Activated naive CD4-positive, alpha-beta T cell treated with anti-CD3 and anti-CD28 coated beads, Interleukin-2, amount 10 ng/mL, durations not matched to agents 7 days and 5 days (primary cell): ENCODE measurements at regions of chr3 and their contacts with region 1.

Region 1: GRCh38 chr3:112293368-112294321 is at the start of gene SLC9C1:
- DNase-seq: peak; percentile 65
- H3K4me3 Mint-ChIP-seq: peak within 1 kb of the TSS; percentile 53
- H3K27ac Mint-ChIP-seq: peak within 1 kb of the TSS; percentile 77
- H3K4me1 Mint-ChIP-seq: peaks cover 35% of the 10 kb centered on the region
- H3K27me3 Mint-ChIP-seq: no peaks in the 10 kb centered on the region

Region 2: DNA sequence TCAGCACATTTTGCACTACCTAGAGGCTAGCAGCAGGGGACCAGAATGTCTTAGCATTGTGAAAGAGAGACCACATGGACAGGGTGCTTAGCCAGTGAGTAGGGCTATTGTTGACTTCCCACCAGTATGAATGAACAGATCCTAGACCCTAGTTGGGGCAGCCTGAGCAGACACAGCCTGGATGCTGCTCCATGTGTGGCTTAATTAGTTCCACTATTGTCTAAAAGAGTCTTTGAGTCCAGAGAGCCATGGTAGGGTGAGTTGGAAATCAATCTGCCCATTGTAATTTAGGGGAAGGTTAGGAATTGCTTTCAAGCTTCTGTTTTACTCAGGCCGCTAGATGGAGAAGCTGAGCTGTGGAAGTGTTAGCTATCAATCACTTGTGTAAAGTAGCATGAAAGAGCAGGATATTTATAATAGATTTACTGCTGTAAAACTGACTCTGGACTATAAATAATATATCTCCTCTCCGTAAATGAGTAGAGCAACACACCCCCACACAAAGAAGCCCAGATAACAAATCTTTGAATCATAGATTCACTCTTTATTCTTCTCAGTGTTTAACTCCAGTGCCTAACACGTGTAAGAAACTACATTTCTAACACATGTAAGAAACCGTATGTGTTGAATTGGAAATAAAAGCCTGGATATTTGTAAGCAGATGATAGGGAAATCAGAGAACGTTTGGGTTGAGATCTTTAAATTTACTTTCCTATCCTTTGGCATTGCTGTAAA is 156.5 kb before region 1 on chr3:
- CTCF ChIA-PET with region 1: interaction called, 35 read pairs
- DNase-seq: peak; percentile 65
- H3K4me3 Mint-ChIP-seq: no peak overlapping the region
- H3K27ac Mint-ChIP-seq: no peak overlapping the region
- H3K4me1 Mint-ChIP-seq: peaks cover 52% of the 10 kb centered on the region
- H3K27me3 Mint-ChIP-seq: no peaks in the 10 kb centered on the region

Region 3: DNA sequence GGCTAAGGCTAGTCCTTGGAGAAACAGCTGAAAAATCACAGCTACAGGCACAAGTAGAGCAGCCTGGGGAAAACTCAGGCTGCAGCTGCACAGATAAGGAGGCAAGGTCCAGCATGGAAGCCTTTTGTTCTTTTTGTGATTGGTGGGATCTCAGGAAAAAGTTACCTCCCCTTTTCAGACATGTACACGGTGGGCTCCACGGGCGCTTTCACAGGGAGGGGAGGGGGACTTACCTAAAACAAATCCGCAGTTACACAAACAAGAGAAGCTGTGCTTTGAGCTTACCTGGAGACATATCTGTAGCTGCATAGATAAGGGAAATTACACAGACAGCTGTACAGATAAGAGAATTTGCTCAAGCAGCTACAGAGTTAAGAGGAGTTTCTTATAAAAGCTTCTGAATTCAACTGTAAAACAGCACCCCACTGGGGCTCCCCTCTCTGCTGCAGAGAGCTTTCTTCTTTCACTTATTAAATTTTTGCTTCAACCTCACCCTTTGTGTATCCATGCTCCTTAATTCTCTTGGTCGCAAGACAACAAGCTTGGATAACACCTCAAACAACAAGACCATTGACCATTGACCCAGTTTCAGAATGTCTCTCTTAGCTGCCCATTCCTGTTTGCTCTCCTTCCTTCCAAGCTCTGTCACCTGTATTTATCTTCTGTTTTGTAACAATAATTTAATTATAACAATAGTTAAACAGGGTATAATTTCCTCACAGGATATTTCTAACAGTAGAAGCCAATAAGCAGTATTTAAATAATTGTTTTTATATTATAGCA is 28.4 kb after region 1 on chr3:
- CTCF ChIA-PET with region 1: interaction called, 21 read pairs
- DNase-seq: no peak
- H3K4me3 Mint-ChIP-seq: no peak overlapping the region
- H3K27ac Mint-ChIP-seq: no peak overlapping the region
- H3K4me1 Mint-ChIP-seq: peaks cover 6% of the 10 kb centered on the region
- H3K27me3 Mint-ChIP-seq: peaks cover 30% of the 10 kb centered on the region

Region 4: DNA sequence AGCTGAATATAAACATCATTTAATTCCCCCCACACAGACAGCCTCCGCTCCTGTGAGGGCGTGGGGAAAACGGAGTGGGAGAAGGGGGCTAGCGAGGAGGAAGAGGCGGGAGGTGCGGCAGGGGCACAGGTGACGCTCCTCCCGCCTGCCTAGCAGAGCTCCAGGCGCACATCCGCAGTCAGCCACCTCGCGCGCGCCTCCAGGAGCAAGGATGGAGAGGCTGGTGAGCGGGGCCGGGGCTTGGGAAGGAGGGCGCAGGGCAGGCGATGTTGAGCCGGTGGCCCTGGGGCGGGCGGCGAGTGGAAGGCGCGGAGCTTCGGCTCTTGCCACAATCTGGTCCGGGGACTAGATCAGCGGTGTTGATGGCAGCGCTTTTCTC is 39.3 kb after region 1 on chr3 and contains the start of gene CD200:
- CTCF ChIA-PET with region 1: interaction called, 13 read pairs
- DNase-seq: peak; percentile 72
- H3K4me3 Mint-ChIP-seq: peak within 1 kb of the TSS; percentile 85
- H3K27ac Mint-ChIP-seq: peak within 1 kb of the TSS; percentile 88
- H3K4me1 Mint-ChIP-seq: peaks cover 54% of the 10 kb centered on the region
- H3K27me3 Mint-ChIP-seq: no peaks in the 10 kb centered on the region

Region 5: GRCh38 chr3:112519424-112520001 is 225.9 kb after region 1 on chr3:
- CTCF ChIA-PET with region 1: interaction called, 27 read pairs
- DNase-seq: peak; percentile 48
- H3K4me3 Mint-ChIP-seq: no peak overlapping the region
- H3K27ac Mint-ChIP-seq: no peak overlapping the region
- H3K4me1 Mint-ChIP-seq: peaks cover 34% of the 10 kb centered on the region
- H3K27me3 Mint-ChIP-seq: no peaks in the 10 kb centered on the region

Region 6: GRCh38 chr3:112582244-112582874 is 288.7 kb after region 1 on chr3:
- CTCF ChIA-PET with region 1: interaction called, 10 read pairs
- DNase-seq: peak; percentile 59
- H3K4me3 Mint-ChIP-seq: no peak overlapping the region
- H3K27ac Mint-ChIP-seq: no peak overlapping the region
- H3K4me1 Mint-ChIP-seq: peaks cover 7% of the 10 kb centered on the region
- H3K27me3 Mint-ChIP-seq: no peaks in the 10 kb centered on the region